ENCODE measurements at regions of chr11 and their contacts with region 1.

Region 1: DNA sequence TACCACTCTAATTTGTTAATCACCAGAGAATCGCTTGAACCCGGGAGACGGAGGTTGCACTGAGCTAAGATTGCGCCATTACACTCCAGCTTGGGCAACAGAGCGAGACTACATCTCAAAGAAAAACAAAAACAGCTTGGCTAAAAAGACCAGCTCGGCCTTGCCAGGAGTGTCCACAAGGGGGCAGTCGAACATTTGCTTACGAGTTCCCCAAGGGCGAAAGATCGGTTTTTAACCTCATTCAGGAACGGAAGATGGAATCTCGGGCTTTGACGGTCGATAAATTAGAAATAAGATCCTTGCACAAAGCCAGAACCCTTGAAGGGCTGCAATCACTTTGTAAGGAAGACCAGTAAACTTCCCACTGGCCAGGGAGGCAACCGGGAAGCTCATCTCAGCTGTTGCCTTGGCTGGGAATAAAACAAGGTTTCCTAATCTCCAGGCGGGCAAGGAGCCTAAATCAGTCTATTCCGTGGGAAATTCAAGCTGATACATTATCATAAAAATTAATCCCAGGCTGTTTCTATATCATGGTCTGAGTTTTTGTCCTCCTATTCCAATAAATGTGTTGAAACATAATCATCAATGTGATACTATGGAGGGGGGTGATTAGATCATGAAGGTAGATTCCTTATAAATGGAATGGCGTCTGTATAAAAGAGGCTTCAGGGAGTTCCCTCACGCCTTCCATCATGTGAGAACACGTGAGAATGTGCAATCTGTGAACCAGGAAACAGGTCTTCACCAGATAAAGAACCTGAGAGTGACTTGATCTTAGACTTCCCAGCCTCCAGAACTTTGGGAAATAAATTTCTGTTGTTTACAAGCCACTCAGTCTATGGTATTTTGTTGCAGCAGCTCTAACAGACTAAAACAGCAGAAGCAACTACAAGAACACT is 14.9 kb upstream of the SLC29A2 start:
- DNase-seq: peak; percentile 91
- H3K4me3 Mint-ChIP-seq: no peak overlapping the region
- H3K27ac Mint-ChIP-seq: peak overlapping the region; percentile 6
- H3K4me1 Mint-ChIP-seq: peaks cover 8% of the 10 kb centered on the region
- H3K27me3 Mint-ChIP-seq: peaks cover 21% of the 10 kb centered on the region

Region 2: GRCh38 chr11:66311965-66312548 is 74.4 kb before region 1 on chr11:
- CTCF ChIA-PET with region 1: interaction called, 80 read pairs
- DNase-seq: peak; percentile 98
- H3K4me3 Mint-ChIP-seq: peak overlapping the region; percentile 85
- H3K27ac Mint-ChIP-seq: peak overlapping the region; percentile 100
- H3K4me1 Mint-ChIP-seq: peaks cover 39% of the 10 kb centered on the region
- H3K27me3 Mint-ChIP-seq: peaks cover 24% of the 10 kb centered on the region

Region 3: GRCh38 chr11:66344550-66345315 is 41.7 kb before region 1 on chr11 and contains the start of gene BRMS1:
- CTCF ChIA-PET with region 1: interaction called, 11 read pairs
- DNase-seq: peak; percentile 99
- H3K4me3 Mint-ChIP-seq: peak within 1 kb of the TSS; percentile 94
- H3K27ac Mint-ChIP-seq: peak within 1 kb of the TSS; percentile 92
- H3K4me1 Mint-ChIP-seq: peaks cover 54% of the 10 kb centered on the region
- H3K27me3 Mint-ChIP-seq: peaks cover 7% of the 10 kb centered on the region

Region 4: DNA sequence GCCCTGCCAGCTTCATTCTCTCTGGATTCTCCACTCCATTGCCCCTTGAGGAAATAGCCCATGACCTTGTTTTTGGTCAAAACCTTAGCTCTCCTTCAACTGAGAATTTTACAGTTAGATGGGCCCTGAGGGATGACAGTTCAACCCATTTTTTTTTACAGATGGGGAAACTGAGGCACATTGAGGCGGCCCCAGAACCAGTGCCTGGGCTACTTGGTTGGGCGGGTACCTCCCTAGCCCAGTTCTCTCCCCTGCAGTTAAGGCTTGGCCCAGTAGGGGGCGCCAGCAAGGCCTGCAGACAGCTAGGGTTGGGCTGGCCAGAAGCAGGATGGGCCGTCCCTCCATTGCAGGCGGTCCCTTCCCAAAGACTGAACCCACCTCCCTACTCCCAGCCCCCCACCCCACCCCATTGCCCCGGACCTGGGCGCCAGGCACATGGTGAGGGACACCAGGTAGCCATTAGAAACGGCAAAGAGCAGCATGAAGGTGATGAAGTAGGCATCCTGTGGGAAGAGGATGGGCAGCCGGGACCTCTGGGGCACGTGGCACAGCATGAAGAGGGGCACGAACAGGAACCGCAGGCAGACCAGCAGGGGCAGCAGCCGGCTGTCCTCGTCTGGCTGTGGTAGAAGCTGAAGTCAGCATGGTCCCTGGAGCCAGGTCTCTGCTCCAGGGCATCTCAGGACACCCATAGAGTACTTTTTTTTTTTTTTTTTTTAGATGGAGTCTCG is 22.4 kb before region 1 on chr11:
- CTCF ChIA-PET with region 1: interaction called, 22 read pairs
- DNase-seq: peak; percentile 84
- H3K4me3 Mint-ChIP-seq: no peak overlapping the region
- H3K27ac Mint-ChIP-seq: no peak overlapping the region
- H3K4me1 Mint-ChIP-seq: peaks cover 3% of the 10 kb centered on the region
- H3K27me3 Mint-ChIP-seq: no peaks in the 10 kb centered on the region

Region 5: DNA sequence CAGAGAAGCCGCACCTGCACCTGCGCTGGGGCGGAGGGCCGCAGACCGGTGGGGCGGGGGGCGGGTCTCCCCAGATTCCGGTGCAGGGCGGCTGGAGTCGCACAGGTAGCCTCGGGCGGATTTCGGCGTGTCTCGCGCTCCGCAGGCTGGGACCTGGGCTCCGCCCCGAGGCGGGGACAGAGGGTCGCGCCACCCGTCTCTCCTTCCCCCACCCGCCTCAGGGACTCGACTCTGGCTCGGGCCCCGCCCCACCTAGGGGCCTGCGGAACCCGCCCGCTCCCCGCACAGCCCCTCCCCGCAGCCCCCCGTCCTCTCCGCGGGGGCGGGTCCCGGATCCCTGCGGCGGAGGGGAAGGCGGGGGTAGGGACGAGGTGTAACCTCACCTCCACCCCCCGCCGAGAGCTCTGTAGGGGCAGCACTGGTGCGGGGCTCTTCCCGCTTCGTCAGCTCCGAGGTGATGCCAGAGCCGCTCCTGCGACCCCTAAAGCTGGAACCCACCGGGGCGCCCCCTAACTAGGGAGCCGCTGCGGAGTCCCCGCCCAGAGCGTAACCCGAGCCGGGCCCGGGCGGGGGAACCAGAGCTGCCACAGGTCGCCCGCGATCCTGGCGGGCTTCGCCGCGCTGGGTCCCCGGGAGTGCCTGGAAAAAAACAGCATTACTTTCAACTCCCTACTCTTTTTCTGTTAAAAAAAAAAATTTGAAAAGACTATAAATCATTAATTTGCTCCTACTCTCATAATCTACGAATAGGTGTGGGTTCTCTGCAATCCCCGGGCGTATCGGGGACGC is 14.6 kb before region 1 on chr11 and contains the start of gene SLC29A2:
- CTCF ChIA-PET with region 1: interaction called, 20 read pairs
- DNase-seq: peak; percentile 90
- H3K4me3 Mint-ChIP-seq: peak within 1 kb of the TSS; percentile 84
- H3K27ac Mint-ChIP-seq: peak within 1 kb of the TSS; percentile 98
- H3K4me1 Mint-ChIP-seq: peaks cover 29% of the 10 kb centered on the region
- H3K27me3 Mint-ChIP-seq: peaks cover 4% of the 10 kb centered on the region

Region 6: DNA sequence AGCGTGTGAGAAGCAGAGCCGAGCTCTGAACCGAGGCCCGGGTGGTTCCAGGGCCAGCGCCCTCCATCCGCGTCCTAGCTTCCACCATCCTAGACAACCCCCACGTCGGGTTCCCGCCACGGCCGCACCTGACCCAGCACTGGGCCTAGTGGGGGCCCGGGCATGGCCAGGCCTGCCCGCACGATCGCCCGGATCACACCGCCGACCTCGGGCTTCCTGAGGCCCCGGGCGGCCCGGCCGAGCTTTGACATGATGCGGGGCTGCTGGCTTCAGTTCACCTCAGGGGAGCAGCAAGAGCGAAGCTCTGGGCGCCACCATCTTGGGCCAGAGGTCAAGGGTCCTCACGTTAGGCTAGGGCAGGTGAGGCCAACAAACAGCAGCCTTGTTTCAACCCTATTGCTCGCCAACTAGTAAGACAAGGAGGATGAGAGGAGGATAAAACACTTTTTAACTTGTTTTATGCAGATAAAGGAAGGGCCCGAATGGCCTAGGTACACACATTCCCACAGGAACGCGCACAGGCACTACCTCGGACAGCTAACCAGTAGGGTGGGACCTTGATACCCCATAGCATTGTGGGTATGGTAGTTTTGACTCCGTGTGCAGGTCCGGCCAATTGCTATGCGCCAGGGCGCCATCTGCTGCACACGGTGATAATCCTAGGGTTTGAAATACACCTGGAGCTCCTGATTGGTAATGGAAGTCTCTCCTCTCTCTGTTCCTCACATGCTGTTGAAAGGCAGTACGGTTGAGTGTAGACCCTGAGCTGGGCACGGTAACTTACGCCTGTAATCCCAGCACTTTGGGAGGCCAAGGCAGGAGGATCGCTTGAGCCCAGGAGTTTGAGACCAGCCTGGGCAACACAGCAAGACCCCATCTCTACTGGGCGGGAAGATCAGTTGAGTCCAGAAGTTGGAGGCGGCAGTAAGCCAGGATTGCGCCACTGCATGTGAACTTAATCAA is 52.4 kb after region 1 on chr11 and contains the start of gene MRPL11:
- CTCF ChIA-PET with region 1: interaction called, 12 read pairs
- DNase-seq: peak; percentile 94
- H3K4me3 Mint-ChIP-seq: peak within 1 kb of the TSS; percentile 88
- H3K27ac Mint-ChIP-seq: peak within 1 kb of the TSS; percentile 90
- H3K4me1 Mint-ChIP-seq: peaks cover 19% of the 10 kb centered on the region
- H3K27me3 Mint-ChIP-seq: no peaks in the 10 kb centered on the region

Region 7: GRCh38 chr11:66677599-66678375 is 291.4 kb after region 1 on chr11 and contains the start of gene RBM4B:
- CTCF ChIA-PET with region 1: interaction called, 11 read pairs
- DNase-seq: peak; percentile 97
- H3K4me3 Mint-ChIP-seq: peak within 1 kb of the TSS; percentile 96
- H3K27ac Mint-ChIP-seq: peak within 1 kb of the TSS; percentile 99
- H3K4me1 Mint-ChIP-seq: peaks cover 39% of the 10 kb centered on the region
- H3K27me3 Mint-ChIP-seq: peaks cover 3% of the 10 kb centered on the region